Activated CD4-positive, alpha-beta memory T cell treated with anti-CD3 and anti-CD28 coated beads for 36 hours (primary cell): ENCODE measurements at regions of chr12 and their contacts with region 1.

Region 1: DNA sequence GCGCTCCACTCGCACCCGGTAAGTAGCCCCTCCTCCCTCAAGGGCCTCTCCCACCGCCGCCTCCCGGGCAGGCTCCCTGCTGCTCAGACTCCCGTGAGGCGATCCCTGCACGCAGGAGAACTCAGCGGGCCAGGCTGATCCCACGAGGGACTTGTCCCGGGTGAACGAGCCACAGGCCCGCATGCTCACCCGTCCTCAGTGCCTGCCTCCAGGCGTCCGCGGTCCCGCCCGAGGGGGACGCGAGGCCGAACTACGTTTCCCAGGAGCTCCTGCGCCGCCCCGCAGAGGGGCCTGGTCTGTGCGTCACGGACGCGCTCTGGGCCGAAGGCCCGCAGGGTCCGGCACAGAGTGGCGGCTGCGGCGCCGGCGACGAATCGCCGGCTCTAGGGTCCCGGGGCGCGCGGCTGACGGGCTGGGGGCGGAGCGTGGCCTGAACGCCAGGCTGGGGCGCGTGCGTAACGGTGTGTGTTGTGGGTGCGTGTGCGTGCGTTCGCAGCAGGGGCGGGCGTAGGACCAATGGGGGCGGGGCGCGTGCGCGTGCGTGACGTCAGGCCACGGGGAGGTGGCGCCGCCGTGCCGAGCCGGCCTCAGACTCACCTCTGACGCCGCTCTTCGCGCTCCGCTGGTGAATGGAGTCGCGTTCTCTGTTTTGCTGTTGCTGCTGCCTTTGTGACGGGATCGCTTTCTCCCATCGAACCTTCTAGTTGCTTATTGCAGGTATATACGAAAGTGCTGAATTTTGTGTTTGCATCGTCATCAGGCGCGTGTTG is at the starts of genes ZNF10 and ZNF891:
- DNase-seq: peak; percentile 98
- H3K4me3 Mint-ChIP-seq: peak within 1 kb of the TSS; percentile 97
- H3K27ac Mint-ChIP-seq: peak within 1 kb of the TSS; percentile 96
- H3K4me1 Mint-ChIP-seq: peaks cover 14% of the 10 kb centered on the region
- H3K27me3 Mint-ChIP-seq: no peaks in the 10 kb centered on the region
- total RNA-seq, gene ZNF10: 3.7 to 4.1 TPM
- total RNA-seq, gene ZNF891: 1.1 to 1.2 TPM

Region 2: GRCh38 chr12:132887513-132888351 is 242.5 kb before region 1 on chr12 and contains the start of gene CHFR:
- CTCF ChIA-PET with region 1: no interaction called
- POLR2A ChIA-PET with region 1: no interaction called
- intact Hi-C with region 1: loop called (anchors 1 kb)
- DNase-seq: peak; percentile 98
- H3K4me3 Mint-ChIP-seq: peak within 1 kb of the TSS; percentile 99
- H3K27ac Mint-ChIP-seq: peak within 1 kb of the TSS; percentile 100
- H3K4me1 Mint-ChIP-seq: peaks cover 17% of the 10 kb centered on the region
- H3K27me3 Mint-ChIP-seq: no peaks in the 10 kb centered on the region
- total RNA-seq, gene CHFR: 41.2 to 42.9 TPM

Region 3: DNA sequence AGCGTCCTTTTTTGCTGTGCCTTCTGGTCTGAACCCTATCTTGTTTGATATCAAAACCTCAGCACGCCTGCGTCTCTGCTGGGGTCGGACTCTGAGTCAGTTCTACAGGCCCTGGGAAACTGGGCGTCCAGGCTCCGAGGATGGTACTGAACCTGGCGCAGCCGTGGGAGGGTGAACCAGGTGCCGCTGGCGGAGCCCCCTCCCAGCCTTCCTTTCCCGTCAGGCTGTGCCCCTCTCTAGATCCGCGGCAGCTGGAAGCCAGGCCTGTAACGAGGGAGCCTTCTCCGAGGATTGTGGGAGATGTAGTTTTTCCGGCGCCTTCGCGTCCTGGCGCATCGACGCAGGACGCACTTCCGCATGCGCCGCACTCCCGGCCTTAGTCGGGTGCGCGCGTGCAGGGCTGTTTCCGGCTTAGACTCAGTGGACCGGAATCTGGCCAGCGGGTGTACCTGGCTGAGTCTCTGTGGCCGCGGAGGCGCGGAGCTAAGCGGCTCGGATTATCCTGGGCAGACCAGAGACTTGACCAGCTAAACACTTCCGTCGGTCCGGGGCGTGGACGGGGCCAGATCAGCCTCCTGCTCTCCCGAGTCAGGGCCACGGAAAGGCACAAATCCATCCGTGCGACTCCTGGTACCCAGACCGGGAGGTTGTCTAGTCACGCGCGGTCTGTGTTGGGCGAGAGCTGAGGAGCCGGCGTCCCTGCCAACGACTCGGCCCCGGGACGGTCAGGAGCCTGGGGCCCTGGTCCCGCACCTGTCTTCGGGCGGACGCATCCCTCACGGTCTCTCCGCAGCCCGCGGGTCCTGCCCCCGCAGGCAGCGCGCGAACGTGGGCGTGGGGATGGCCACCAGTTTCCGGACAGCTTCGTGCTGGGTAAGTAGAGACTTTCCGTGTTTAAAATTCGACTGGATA is 144.0 kb before region 1 on chr12 and contains the start of gene ZNF26:
- CTCF ChIA-PET with region 1: no interaction called
- POLR2A ChIA-PET with region 1: interaction called, 3 read pairs
- intact Hi-C with region 1: loop called (anchors 1 kb)
- DNase-seq: peak; percentile 92
- H3K4me3 Mint-ChIP-seq: peak within 1 kb of the TSS; percentile 89
- H3K27ac Mint-ChIP-seq: peak within 1 kb of the TSS; percentile 94
- H3K4me1 Mint-ChIP-seq: peaks cover 27% of the 10 kb centered on the region
- H3K27me3 Mint-ChIP-seq: no peaks in the 10 kb centered on the region
- total RNA-seq, gene ZNF26: 10.2 to 10.8 TPM

Region 4: DNA sequence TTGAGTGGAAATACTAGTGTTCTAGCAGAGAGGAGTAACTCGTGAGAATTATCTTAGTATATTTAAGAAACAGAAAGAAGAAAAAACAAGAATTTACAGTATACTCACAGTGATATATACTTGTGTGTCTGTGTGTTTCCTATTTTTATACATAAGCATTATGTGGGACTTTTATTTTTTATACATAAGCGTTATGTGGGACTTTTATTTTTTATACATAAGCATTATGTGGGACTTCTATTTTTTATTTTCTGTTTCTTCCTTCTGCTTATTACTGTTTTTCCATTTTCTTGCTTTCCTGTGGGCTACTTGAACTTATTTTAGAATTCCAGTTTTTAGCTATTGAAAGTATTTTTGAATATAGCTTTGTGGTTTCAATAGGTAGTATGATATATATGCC is 56.4 kb before region 1 on chr12:
- CTCF ChIA-PET with region 1: no interaction called
- POLR2A ChIA-PET with region 1: no interaction called
- intact Hi-C with region 1: no loop called
- DNase-seq: no peak
- H3K4me3 Mint-ChIP-seq: no peak overlapping the region
- H3K27ac Mint-ChIP-seq: no peak overlapping the region
- H3K4me1 Mint-ChIP-seq: no peaks in the 10 kb centered on the region
- H3K27me3 Mint-ChIP-seq: no peaks in the 10 kb centered on the region

Region 5: DNA sequence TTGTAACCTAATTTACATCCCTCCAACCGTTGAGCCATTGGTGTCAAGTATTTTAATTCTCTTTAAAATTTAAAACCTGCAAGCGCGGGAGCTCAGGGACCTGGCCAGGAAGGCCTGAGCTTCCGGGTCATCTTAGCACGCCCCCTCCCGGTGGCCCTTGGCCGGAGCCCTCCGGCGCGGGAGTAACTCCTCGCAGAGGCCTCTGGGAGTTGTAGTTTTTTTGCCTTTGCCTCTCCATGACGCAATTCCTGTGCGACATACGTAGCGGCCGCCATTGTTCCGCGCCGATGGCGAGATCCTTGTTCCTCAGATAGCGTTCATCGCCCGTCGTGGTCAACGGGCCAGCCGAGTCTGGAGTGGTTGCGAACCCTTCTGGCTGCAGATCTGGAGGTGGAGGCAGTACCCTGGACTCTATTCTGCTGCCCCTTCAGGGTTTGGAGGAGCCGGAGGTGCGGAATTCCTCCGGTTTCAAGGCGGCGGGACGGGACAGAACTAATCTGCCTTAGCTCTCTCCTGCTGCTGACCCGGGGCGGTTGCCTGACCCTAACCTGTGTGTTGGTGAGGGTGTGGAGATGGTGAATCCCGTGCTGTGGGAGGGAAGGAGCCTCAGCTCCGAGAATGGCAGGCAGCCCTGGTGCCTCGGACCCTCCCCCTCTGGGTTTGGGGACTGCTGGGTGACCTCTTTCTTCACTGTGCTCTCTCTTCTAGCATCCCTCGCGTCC is 51.2 kb after region 1 on chr12 and contains the start of gene ZNF268:
- CTCF ChIA-PET with region 1: interaction called, 5 read pairs
- POLR2A ChIA-PET with region 1: no interaction called
- intact Hi-C with region 1: loop called (anchors 1 kb)
- DNase-seq: peak; percentile 94
- H3K4me3 Mint-ChIP-seq: peak within 1 kb of the TSS; percentile 95
- H3K27ac Mint-ChIP-seq: peak within 1 kb of the TSS; percentile 80
- H3K4me1 Mint-ChIP-seq: peaks cover 12% of the 10 kb centered on the region
- H3K27me3 Mint-ChIP-seq: no peaks in the 10 kb centered on the region
- total RNA-seq, gene ZNF268: 9.2 to 11.8 TPM